Activated naive CD4-positive, alpha-beta T cell treated with anti-CD3 and anti-CD28 coated beads for 36 hours (primary cell): ENCODE measurements at regions of chr11 and their contacts with region 1.

Region 1: GRCh38 chr11:4393209-4393857 is at the start of gene TRIM21:
- DNase-seq: peak; percentile 96
- H3K4me3 Mint-ChIP-seq: peak within 1 kb of the TSS; percentile 86
- H3K27ac Mint-ChIP-seq: peak within 1 kb of the TSS; percentile 88
- H3K4me1 Mint-ChIP-seq: peaks cover 34% of the 10 kb centered on the region
- H3K27me3 Mint-ChIP-seq: peaks cover 8% of the 10 kb centered on the region
- total RNA-seq, gene TRIM21: 23.5 to 26.0 TPM

Region 2: DNA sequence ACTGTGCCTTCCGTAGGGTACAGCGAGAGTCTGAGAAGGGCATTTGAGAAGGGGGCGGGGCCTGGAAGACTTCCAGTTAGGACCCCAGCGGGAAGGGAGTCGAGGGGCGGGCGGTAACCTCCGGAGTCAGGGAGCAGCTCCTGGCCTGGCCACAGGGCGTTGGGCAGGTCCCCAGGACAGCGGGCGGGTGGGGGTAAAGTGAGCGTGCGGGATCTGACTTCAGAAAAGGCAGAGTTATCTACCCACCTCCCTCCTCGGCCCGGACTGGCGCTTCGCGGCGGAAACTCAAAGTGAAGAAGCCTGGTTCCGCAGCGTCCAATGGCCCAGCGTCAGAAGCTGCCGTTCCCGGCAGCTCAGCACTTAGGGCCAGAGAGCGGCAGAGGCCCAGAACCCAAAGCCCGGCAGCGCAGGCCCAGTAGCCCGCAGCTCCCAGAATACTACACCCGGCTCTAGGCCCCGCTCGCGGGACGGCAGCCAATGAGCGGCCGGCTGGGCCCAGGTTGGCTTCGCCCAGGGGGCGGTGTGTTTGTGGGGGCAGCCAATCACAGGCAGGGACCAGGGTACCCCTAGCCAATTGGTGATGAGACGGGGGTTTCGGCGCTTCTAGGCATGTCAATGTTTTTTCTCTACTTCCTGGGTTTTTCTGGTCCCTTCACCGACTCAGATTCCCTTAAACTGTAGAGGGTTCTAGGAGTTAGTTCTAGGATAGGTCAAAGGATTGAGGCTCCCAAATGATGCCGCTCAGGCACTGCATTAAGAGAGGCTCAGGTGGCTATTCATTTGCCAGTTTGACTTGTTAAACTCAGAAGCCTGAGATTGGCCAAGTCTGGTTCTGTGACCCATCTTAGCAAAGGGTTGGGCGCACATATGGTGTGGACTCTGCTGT is 214.7 kb after region 1 on chr11 and contains the start of gene TRIM68:
- CTCF ChIA-PET with region 1: no interaction called
- intact Hi-C with region 1: loop called (anchors 1 kb)
- DNase-seq: peak; percentile 97
- H3K4me3 Mint-ChIP-seq: peak within 1 kb of the TSS; percentile 94
- H3K27ac Mint-ChIP-seq: peak within 1 kb of the TSS; percentile 88
- H3K4me1 Mint-ChIP-seq: peaks cover 45% of the 10 kb centered on the region
- H3K27me3 Mint-ChIP-seq: no peaks in the 10 kb centered on the region
- total RNA-seq, gene TRIM68: 11.3 to 15.4 TPM